ENCODE measurements at regions of chr22 and their contacts with region 1.

Region 1: GRCh38 chr22:37316875-37317371 is 34.6 kb downstream of the CYTH4 start:
- DNase-seq: peak; percentile 82
- ATAC-seq: peak; percentile 82
- H3K4me3 Mint-ChIP-seq: no peak overlapping the region
- H3K27ac Mint-ChIP-seq: no peak overlapping the region
- H3K4me1 Mint-ChIP-seq: peaks cover 42% of the 10 kb centered on the region
- H3K27me3 Mint-ChIP-seq: no peaks in the 10 kb centered on the region
- CTCF ChIP-seq: peak; percentile 95

Region 2: DNA sequence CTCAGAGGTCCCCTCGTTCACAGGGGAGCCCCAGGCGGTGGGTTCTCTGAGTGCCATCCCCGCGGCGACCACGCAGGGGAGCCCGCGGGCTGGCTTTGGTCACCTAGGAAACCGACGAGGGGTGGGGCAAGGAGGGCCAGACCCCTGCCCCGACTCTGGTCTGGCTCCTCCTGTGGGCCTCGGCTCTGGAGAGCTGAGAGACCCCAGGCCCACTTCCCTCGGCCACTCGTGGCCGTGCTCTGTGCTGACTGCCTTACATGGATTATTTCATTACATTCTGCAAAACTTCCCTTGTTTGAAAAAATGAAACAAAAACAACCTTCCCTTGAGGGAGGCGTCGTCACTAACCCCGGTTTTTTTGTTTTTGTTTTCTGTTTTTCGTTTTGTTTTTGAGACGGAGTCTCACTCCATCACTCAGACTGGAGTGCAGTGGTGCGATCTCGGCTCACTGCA is 49.8 kb before region 1 on chr22:
- CTCF ChIA-PET with region 1: interaction called, 40 read pairs
- POLR2A ChIA-PET with region 1: no interaction called
- intact Hi-C with region 1: no loop called
- DNase-seq: peak; percentile 75
- ATAC-seq: peak; percentile 96
- H3K4me3 Mint-ChIP-seq: peak overlapping the region; percentile 73
- H3K27ac Mint-ChIP-seq: peak overlapping the region; percentile 81
- H3K4me1 Mint-ChIP-seq: peaks cover 28% of the 10 kb centered on the region
- H3K27me3 Mint-ChIP-seq: no peaks in the 10 kb centered on the region
- CTCF ChIP-seq: peak; percentile 99

Region 3: DNA sequence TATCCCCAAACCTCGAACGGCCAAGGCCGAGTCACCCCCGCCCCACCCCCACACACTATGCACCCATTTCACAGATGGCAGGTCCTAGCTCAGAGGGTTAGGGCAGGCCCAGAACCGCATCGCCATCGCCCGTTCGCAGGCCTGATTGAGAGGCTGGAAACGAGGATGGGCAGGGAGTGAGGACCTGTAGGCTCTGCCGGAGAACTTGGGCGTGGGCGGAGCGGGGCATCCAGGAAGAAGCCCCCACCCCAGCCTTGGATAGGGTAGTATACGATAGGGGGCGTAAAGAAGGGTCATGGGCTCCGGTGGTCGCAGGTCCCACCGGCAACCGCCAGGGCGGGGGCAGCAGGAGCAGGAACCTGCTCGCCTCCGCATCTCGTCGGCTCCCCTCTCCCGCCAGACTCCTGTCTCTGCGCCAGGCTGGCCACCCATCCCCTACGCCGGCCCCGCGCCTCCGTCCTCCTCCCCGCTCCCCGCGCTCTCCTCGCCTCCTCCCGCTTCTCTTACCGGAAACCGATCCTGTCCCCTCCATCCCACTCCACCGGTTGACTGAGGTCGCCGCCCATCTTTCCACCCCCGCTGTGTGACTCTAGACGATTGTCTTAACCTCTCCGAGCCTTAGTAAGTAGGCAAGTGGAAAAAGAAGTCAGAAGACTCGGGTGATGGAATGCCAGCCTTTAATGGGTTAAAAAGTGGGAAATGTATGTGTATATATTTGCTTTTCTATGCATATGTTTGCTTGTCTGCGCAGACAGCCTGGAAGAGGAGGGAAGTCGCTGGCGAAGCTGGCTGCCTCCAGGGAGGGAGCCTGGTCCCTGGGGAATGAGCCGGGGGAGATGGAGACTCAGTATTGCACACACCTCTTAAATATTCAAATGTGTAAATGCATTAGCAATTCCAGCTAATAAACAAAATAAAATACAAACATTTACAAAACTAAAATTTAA is 18.2 kb after region 1 on chr22:
- CTCF ChIA-PET with region 1: interaction called, 16 read pairs
- POLR2A ChIA-PET with region 1: interaction called, 3 read pairs
- intact Hi-C with region 1: no loop called
- DNase-seq: no peak
- ATAC-seq: no peak
- H3K4me3 Mint-ChIP-seq: no peak overlapping the region
- H3K27ac Mint-ChIP-seq: no peak overlapping the region
- H3K4me1 Mint-ChIP-seq: peaks cover 10% of the 10 kb centered on the region
- H3K27me3 Mint-ChIP-seq: peaks cover 34% of the 10 kb centered on the region
- CTCF ChIP-seq: no peak

Region 4: GRCh38 chr22:37428649-37429586 is 112.0 kb after region 1 on chr22:
- CTCF ChIA-PET with region 1: interaction called, 71 read pairs
- POLR2A ChIA-PET with region 1: interaction called, 4 read pairs
- intact Hi-C with region 1: no loop called
- DNase-seq: peak; percentile 75
- ATAC-seq: no peak
- H3K4me3 Mint-ChIP-seq: no peak overlapping the region
- H3K27ac Mint-ChIP-seq: no peak overlapping the region
- H3K4me1 Mint-ChIP-seq: peaks cover 23% of the 10 kb centered on the region
- H3K27me3 Mint-ChIP-seq: peaks cover 53% of the 10 kb centered on the region
- CTCF ChIP-seq: peak; percentile 88

Region 5: DNA sequence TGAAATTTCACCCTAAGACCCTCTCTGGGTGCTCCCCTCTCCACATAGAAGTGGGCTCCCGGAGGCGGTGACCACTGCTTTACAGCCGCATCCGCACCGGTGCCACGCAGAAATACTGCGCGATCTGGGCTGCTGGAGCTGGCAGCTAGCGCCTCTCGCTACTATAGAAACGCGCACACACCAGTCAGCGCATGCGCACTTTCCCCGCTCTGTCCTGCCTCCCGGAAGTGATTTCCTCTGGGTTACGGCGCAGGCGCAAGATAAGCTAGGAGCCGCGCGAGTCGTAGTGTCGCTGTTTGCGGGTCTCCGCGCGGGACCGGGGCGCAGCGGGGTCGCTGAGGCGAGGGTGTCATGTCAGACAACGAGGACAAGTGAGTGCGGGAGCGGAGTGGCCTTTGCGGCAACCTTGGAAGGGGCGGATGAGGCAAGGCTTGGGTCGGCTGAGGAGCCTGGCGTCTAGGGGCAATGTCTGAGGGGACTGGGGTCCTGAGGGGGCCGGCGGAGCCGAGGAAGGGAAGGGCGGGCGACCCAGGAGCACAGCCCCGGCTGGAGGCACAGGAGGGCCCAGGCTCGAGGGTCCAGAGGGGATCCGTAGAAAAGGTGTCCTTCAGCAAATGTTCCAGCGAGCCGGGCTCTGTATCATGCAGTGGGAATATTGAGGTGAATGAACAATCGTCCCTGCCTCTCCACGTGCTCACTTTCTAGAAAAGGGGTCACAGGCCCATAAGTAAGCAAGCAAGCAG is 636.7 kb after region 1 on chr22 and contains the starts of genes C22orf23 and POLR2F:
- CTCF ChIA-PET with region 1: no interaction called
- POLR2A ChIA-PET with region 1: no interaction called
- intact Hi-C with region 1: no loop called
- DNase-seq: peak; percentile 98
- ATAC-seq: peak; percentile 96
- H3K4me3 Mint-ChIP-seq: peak within 1 kb of the TSS; percentile 97
- H3K27ac Mint-ChIP-seq: peak within 1 kb of the TSS; percentile 97
- H3K4me1 Mint-ChIP-seq: peaks cover 30% of the 10 kb centered on the region
- H3K27me3 Mint-ChIP-seq: peaks cover 14% of the 10 kb centered on the region
- CTCF ChIP-seq: no peak
- total RNA-seq, gene C22orf23: not detected
- total RNA-seq, gene POLR2F: 82.2 to 85.4 TPM